Heart right ventricle (tissue), 16 donors: ENCODE measurements at regions of chr4 and their contacts with region 1.

Region 1: GRCh38 chr4:159358226-159358625 is 255.3 kb downstream of the RAPGEF2 start:
- DNase-seq: no peak
- ATAC-seq: peak in 2 of 8 donors; percentile 19 to 21
- H3K4me3 ChIP-seq: no peak overlapping the region
- H3K27ac ChIP-seq: peak overlapping the region in 7 of 10 donors; percentile 2 to 55 (median 15)
- H3K4me1 ChIP-seq: peaks cover 0 to 36% (median 5%) of the 10 kb centered on the region in 9 donors
- H3K27me3 ChIP-seq: no peaks in the 10 kb centered on the region
- CTCF ChIP-seq: no peak

Region 2: GRCh38 chr4:159284733-159285132 is 73.5 kb before region 1 on chr4:
- intact Hi-C with region 1: loop called in 1 of 10 experiments (anchors 1 kb)
- DNase-seq: no peak
- ATAC-seq: no peak
- H3K4me3 ChIP-seq: no peak overlapping the region
- H3K27ac ChIP-seq: no peak overlapping the region
- H3K4me1 ChIP-seq: peaks cover 0 to 61% (median 40%) of the 10 kb centered on the region in 9 donors
- H3K27me3 ChIP-seq: no peaks in the 10 kb centered on the region
- CTCF ChIP-seq: no peak

Region 3: DNA sequence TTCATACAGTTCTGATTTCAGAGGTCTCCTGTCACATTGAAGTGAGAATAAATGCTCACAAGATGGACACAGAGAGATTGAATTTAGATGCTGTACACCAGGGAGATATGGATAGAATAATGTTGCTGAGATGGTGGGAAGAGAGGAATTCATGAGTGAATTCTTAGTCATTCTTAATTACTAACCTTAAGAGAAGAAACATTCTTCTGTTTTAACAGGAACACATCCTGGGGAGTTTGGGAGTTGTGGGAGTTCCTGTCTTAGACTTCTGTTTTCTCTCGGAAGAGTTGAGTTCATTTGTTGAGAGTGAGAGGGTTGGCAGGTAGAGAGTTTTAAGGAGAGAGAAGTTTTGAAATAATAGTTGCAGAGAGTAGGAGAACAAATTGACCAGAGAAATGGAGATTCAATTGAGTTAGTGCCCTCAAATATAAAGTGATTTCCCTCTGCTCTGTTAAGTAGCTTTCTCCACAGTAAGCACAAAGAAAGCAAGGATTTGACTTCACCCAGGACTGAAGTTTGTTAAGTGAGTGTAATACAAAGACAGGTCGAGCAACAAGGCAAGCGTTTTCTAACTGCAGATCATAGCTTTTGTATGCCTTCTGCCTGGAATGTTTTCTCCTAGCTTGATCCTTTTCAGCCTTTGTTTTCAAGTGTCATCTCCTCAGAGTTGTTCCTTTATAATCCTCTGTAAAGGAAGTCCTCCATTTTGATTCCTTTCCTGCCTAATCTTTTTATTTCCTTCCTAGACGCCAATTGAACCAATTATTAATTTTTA is 49.5 kb before region 1 on chr4:
- intact Hi-C with region 1: no loop called
- DNase-seq: no peak
- ATAC-seq: peak in 4 of 8 donors; percentile 13 to 33 (median 26)
- H3K4me3 ChIP-seq: no peak overlapping the region
- H3K27ac ChIP-seq: peak overlapping the region in 5 of 10 donors; percentile 1 to 41 (median 26)
- H3K4me1 ChIP-seq: peaks cover 0 to 65% (median 33%) of the 10 kb centered on the region in 9 donors
- H3K27me3 ChIP-seq: no peaks in the 10 kb centered on the region
- CTCF ChIP-seq: no peak

Region 4: GRCh38 chr4:159428975-159429692 is 70.9 kb after region 1 on chr4:
- intact Hi-C with region 1: loop called in 2 of 10 experiments (anchors 10 kb)
- DNase-seq: no peak
- ATAC-seq: peak; percentile 29 to 87 (median 77)
- H3K4me3 ChIP-seq: peak overlapping the region in 2 of 10 donors; percentile 13 to 24
- H3K27ac ChIP-seq: peak overlapping the region in 4 of 10 donors; percentile 17 to 59 (median 44)
- H3K4me1 ChIP-seq: peaks cover 4 to 24% (median 13%) of the 10 kb centered on the region in 9 donors
- H3K27me3 ChIP-seq: no peaks in the 10 kb centered on the region
- CTCF ChIP-seq: no peak

Region 5: DNA sequence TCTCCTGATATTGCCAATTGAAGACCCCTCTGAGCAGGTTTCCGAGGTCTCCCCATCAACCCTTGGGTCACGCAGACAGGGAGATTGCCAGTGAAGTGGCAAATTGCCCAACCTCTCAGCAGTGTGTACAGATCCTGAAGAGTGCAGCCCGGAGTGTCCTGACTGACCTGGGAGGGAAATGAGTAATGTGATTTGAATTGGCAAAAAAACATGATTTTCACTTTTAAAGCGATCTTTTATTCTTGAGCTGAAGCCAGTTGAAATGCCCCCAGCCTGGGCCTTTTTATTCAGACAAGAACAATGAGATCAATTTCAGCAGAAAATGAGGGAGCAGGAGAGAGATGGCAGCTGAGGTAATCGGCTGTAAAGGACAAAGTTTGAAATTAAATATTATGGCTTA is 146.5 kb after region 1 on chr4:
- intact Hi-C with region 1: no loop called
- DNase-seq: no peak
- ATAC-seq: no peak
- H3K4me3 ChIP-seq: no peak overlapping the region
- H3K27ac ChIP-seq: no peak overlapping the region
- H3K4me1 ChIP-seq: peaks cover 0 to 4% (median 0%) of the 10 kb centered on the region in 9 donors
- H3K27me3 ChIP-seq: peaks cover 0 to 51% (median 28%) of the 10 kb centered on the region in 7 donors
- CTCF ChIP-seq: no peak